BJ (cell line): ENCODE measurements at regions of chr15 and their contacts with region 1.

Region 1: GRCh38 chr15:88431441-88431840 is 35.7 kb downstream of the MRPL46 start:
- DNase-seq: no peak
- H3K4me3 ChIP-seq: no peak overlapping the region
- H3K27me3 ChIP-seq: no peaks in the 10 kb centered on the region; the same call in 1 of the 2 replicates
- CTCF ChIP-seq: no peak

Region 2: GRCh38 chr15:88375234-88375927 is 56.1 kb before region 1 on chr15:
- CTCF ChIA-PET with region 1: no interaction called
- POLR2A ChIA-PET with region 1: interaction called, 10 read pairs
- DNase-seq: peak; percentile 29
- H3K4me3 ChIP-seq: no peak overlapping the region
- H3K27me3 ChIP-seq: no peaks in the 10 kb centered on the region
- CTCF ChIP-seq: no peak